Panc1 (cell line): ENCODE measurements at regions of chr7 and their contacts with region 1.

Region 1: GRCh38 chr7:133830081-133830480 is 297.1 kb upstream of the LRGUK start:
- DNase-seq: no peak
- ATAC-seq: no peak
- H3K4me3 ChIP-seq: no peak overlapping the region
- H3K27ac ChIP-seq: no peak overlapping the region
- H3K4me1 ChIP-seq: no peaks in the 10 kb centered on the region
- H3K27me3 ChIP-seq: no peaks in the 10 kb centered on the region
- CTCF ChIP-seq: no peak

Region 2: GRCh38 chr7:133044722-133045473 is 785.2 kb before region 1 on chr7:
- CTCF ChIA-PET with region 1: no interaction called
- POLR2A ChIA-PET with region 1: no interaction called
- in situ Hi-C with region 1: no loop called
- intact Hi-C with region 1: no loop called
- DNase-seq: no peak
- ATAC-seq: no peak
- H3K4me3 ChIP-seq: no peak overlapping the region
- H3K27ac ChIP-seq: no peak overlapping the region
- H3K4me1 ChIP-seq: no peaks in the 10 kb centered on the region
- H3K27me3 ChIP-seq: no peaks in the 10 kb centered on the region
- CTCF ChIP-seq: no peak

Region 3: GRCh38 chr7:133735222-133735621 is 94.9 kb before region 1 on chr7:
- CTCF ChIA-PET with region 1: interaction called, 11 read pairs
- POLR2A ChIA-PET with region 1: no interaction called
- in situ Hi-C with region 1: no loop called
- intact Hi-C with region 1: no loop called
- DNase-seq: no peak
- ATAC-seq: no peak
- H3K4me3 ChIP-seq: no peak overlapping the region
- H3K27ac ChIP-seq: no peak overlapping the region
- H3K4me1 ChIP-seq: no peaks in the 10 kb centered on the region
- H3K27me3 ChIP-seq: no peaks in the 10 kb centered on the region
- CTCF ChIP-seq: no peak

Region 4: GRCh38 chr7:134126966-134127848 is 297.1 kb after region 1 on chr7 and contains the start of gene LRGUK:
- CTCF ChIA-PET with region 1: no interaction called
- POLR2A ChIA-PET with region 1: no interaction called
- in situ Hi-C with region 1: no loop called
- intact Hi-C with region 1: no loop called
- DNase-seq: peak; percentile 46
- ATAC-seq: peak; percentile 100
- H3K4me3 ChIP-seq: peak within 1 kb of the TSS; percentile 74 to 91
- H3K27ac ChIP-seq: no peak within 1 kb of the TSS
- H3K4me1 ChIP-seq: no peaks in the 10 kb centered on the region
- H3K27me3 ChIP-seq: peaks cover 26% of the 10 kb centered on the region
- CTCF ChIP-seq: no peak
- total RNA-seq, gene LRGUK: 0.23 TPM